ENCODE measurements at regions of chr4 and their contacts with region 1.

Region 1: DNA sequence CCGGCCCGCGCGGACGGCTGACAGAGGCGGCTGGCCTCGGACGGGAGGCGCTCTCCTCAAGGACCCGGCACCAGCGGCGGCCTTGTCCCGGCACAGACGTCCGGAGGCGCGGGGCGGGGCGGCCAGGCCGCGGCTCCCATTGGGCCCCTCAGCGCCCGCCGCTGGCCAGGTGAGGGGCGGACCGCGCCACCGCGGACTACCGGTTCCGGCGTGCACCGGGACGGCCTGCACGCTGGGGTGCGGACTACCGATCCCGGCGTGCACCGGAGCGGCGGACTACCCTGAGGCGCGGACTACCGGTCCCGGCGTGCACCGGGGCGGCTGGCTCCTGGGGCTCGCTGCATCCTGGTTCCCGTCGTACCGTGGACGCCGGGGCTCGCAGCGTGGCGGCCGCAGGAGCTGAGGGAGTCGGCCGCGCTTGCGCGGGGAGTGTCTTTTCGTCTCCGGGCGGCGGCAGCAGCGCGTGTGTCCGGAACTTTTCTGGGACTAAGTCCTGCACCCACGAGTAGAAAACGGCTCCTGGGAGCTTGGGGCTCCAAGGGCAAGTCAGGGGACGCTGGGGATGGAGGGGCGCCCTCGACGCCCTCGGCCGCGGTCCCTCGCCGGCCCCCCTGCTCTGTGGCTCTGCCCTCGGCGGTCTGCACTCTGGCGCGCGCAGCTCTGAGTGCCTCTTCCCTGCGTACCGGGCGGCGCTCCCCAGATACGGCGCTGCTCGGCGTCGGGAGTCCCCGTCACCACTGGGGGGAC is at the start of gene LETM1:
- DNase-seq: peak; percentile 90
- H3K4me3 ChIP-seq: peak within 1 kb of the TSS; percentile 44 to 88 (median 83)
- H3K27ac ChIP-seq: peak within 1 kb of the TSS; percentile 28
- H3K4me1 ChIP-seq: peaks cover 17% of the 10 kb centered on the region
- H3K27me3 ChIP-seq: no peaks in the 10 kb centered on the region
- CTCF ChIP-seq: peak; percentile 8 to 20
- POLR2A ChIP-seq: peak; percentile 66
- total RNA-seq, gene LETM1: 58.3 and 62.5 TPM in 2 replicates

Region 2: GRCh38 chr4:1834047-1834775 is 22.0 kb before region 1 on chr4:
- CTCF ChIA-PET with region 1: no interaction called
- POLR2A ChIA-PET with region 1: no interaction called
- dilution Hi-C with region 1: no loop called
- intact Hi-C with region 1: no loop called
- DNase-seq: no peak
- H3K4me3 ChIP-seq: no peak overlapping the region
- H3K27ac ChIP-seq: no peak overlapping the region
- H3K4me1 ChIP-seq: no peaks in the 10 kb centered on the region
- H3K27me3 ChIP-seq: no peaks in the 10 kb centered on the region
- CTCF ChIP-seq: no peak
- POLR2A ChIP-seq: no peak

Region 3: GRCh38 chr4:1870578-1871443 is 14.6 kb after region 1 on chr4 and contains the start of gene NSD2:
- CTCF ChIA-PET with region 1: interaction called, 10 read pairs
- POLR2A ChIA-PET with region 1: interaction called, 4 read pairs
- dilution Hi-C with region 1: no loop called
- intact Hi-C with region 1: loop called (anchors 1 kb)
- DNase-seq: peak; percentile 81
- H3K4me3 ChIP-seq: peak within 1 kb of the TSS; percentile 78 to 95 (median 86)
- H3K27ac ChIP-seq: peak within 1 kb of the TSS; percentile 93
- H3K4me1 ChIP-seq: peaks cover 17% of the 10 kb centered on the region
- H3K27me3 ChIP-seq: peaks cover 0 to 1% of the 10 kb centered on the region in 2 experiments
- CTCF ChIP-seq: no peak
- POLR2A ChIP-seq: peak; percentile 93
- total RNA-seq, gene NSD2: 152 and 171 TPM in 2 replicates

Measured in endothelial cell of umbilical vein (primary cell).